Natural killer cell (primary cell): ENCODE measurements at regions of chr1 and their contacts with region 1.

Region 1: GRCh38 chr1:28552758-28553663 is at the start of gene TRNAU1AP:
- DNase-seq: peak; percentile 95 to 99
- ATAC-seq: peak; percentile 94 to 99 (median 96)
- H3K4me3 ChIP-seq: peak within 1 kb of the TSS; percentile 96
- H3K4me3 Mint-ChIP-seq: peak within 1 kb of the TSS; percentile 98
- H3K27ac ChIP-seq: peak within 1 kb of the TSS; percentile 79
- H3K27ac Mint-ChIP-seq: peak within 1 kb of the TSS; percentile 98 to 99
- H3K4me1 ChIP-seq: peaks cover 18% of the 10 kb centered on the region
- H3K4me1 Mint-ChIP-seq: peaks cover 17 to 19% of the 10 kb centered on the region in 2 donors
- H3K27me3 ChIP-seq: no peaks in the 10 kb centered on the region
- H3K27me3 Mint-ChIP-seq: no peaks in the 10 kb centered on the region
- CTCF ChIP-seq: no peak
- total RNA-seq, gene TRNAU1AP: 28.3 to 38.7 (median 32.1) TPM

Region 2: GRCh38 chr1:28329395-28330153 is 223.4 kb before region 1 on chr1:
- intact Hi-C with region 1: loop called (anchors 1 kb)
- DNase-seq: peak in 1 of 2 donors; percentile 68
- ATAC-seq: peak in 2 of 3 donors; percentile 3 to 14
- H3K4me3 ChIP-seq: peak overlapping the region; percentile 57
- H3K4me3 Mint-ChIP-seq: peak overlapping the region; percentile 97
- H3K27ac ChIP-seq: peak overlapping the region; percentile 87
- H3K27ac Mint-ChIP-seq: peak overlapping the region; percentile 97
- H3K4me1 ChIP-seq: peaks cover 26% of the 10 kb centered on the region
- H3K4me1 Mint-ChIP-seq: peaks cover 25 to 43% of the 10 kb centered on the region in 2 donors
- H3K27me3 ChIP-seq: no peaks in the 10 kb centered on the region
- H3K27me3 Mint-ChIP-seq: no peaks in the 10 kb centered on the region
- CTCF ChIP-seq: no peak

Region 3: DNA sequence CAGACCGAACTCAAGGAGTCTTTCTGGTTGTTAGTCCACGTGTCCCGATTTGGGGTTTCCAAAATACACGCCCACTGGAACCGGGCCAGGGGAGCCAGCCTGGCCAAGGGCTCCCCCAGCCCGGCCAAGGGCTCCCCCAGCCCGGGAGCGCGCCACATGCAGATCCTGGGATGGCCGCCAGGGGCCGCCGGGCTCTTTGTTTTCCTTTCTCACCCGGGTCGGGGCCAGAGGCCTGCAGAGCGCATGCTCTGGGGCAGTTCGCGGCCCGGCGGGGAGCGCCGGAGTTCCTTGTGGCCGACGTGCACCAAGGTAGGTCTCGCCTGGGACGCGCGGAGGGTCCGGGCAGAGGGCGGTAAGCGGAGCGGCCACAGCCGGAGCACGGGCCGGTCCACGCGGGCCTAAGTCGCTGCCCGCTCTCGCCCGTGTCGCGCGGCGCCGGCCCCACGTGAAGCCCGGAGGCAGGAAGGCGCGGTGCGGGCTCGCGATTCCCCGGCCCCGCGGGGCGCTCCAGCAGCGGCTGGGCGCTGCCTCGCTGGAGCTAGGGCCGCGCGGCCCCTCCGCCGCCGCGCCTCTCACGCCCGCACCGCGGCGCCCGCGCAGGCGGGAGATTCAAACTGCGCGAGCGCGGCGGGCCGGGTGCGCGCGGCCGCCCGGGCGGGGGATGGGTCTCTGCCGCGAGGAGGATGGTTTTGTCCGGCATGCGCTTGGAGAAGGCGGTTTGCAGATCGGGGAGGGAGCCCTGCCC is 34.8 kb before region 1 on chr1:
- intact Hi-C with region 1: loop called (anchors 1 kb)
- DNase-seq: peak; percentile 88 to 91
- ATAC-seq: peak; percentile 81 to 91 (median 83)
- H3K4me3 ChIP-seq: peak overlapping the region; percentile 46
- H3K4me3 Mint-ChIP-seq: peak overlapping the region; percentile 93
- H3K27ac ChIP-seq: peak overlapping the region; percentile 34
- H3K27ac Mint-ChIP-seq: peak overlapping the region; percentile 69 to 90
- H3K4me1 ChIP-seq: peaks cover 19% of the 10 kb centered on the region
- H3K4me1 Mint-ChIP-seq: peaks cover 15 to 22% of the 10 kb centered on the region in 2 donors
- H3K27me3 ChIP-seq: no peaks in the 10 kb centered on the region
- H3K27me3 Mint-ChIP-seq: no peaks in the 10 kb centered on the region
- CTCF ChIP-seq: peak; percentile 97

Region 4: GRCh38 chr1:28860332-28861073 is 307.5 kb after region 1 on chr1:
- intact Hi-C with region 1: no loop called
- DNase-seq: no peak
- ATAC-seq: no peak
- H3K4me3 ChIP-seq: no peak overlapping the region
- H3K4me3 Mint-ChIP-seq: no peak overlapping the region
- H3K27ac ChIP-seq: no peak overlapping the region
- H3K27ac Mint-ChIP-seq: no peak overlapping the region
- H3K4me1 ChIP-seq: no peaks in the 10 kb centered on the region
- H3K4me1 Mint-ChIP-seq: no peaks in the 10 kb centered on the region
- H3K27me3 ChIP-seq: no peaks in the 10 kb centered on the region
- H3K27me3 Mint-ChIP-seq: peaks cover 0 to 3% of the 10 kb centered on the region in 2 donors
- CTCF ChIP-seq: no peak